Tibial artery (tissue), 4 donors: ENCODE measurements at regions of chr19 and their contacts with region 1.

Region 1: GRCh38 chr19:34404109-34404897 is at the start of gene PDCD2L:
- DNase-seq: peak; percentile 93
- H3K4me3 ChIP-seq: peak within 1 kb of the TSS; percentile 71 to 88
- H3K27ac ChIP-seq: peak within 1 kb of the TSS; percentile 57 to 68
- H3K4me1 ChIP-seq: peaks cover 0 to 16% (median 6%) of the 10 kb centered on the region in 4 donors
- H3K27me3 ChIP-seq: no peaks in the 10 kb centered on the region
- CTCF ChIP-seq: no peak

Region 2: GRCh38 chr19:34364830-34365462 is 39.4 kb before region 1 on chr19 and contains the start of gene GPI:
- intact Hi-C with region 1: loop called (anchors 5 kb)
- DNase-seq: peak; percentile 39 to 77
- H3K4me3 ChIP-seq: peak within 1 kb of the TSS; percentile 67 to 94
- H3K27ac ChIP-seq: peak within 1 kb of the TSS; percentile 65 to 83
- H3K4me1 ChIP-seq: peaks cover 0 to 32% (median 21%) of the 10 kb centered on the region in 4 donors
- H3K27me3 ChIP-seq: no peaks in the 10 kb centered on the region
- CTCF ChIP-seq: no peak

Region 3: GRCh38 chr19:34501339-34502320 is 97.3 kb after region 1 on chr19:
- intact Hi-C with region 1: loop called (anchors 5 kb)
- DNase-seq: peak; percentile 93 to 98
- H3K4me3 ChIP-seq: no peak overlapping the region
- H3K27ac ChIP-seq: peak overlapping the region; percentile 61 to 83
- H3K4me1 ChIP-seq: peaks cover 0 to 42% (median 14%) of the 10 kb centered on the region in 4 donors
- H3K27me3 ChIP-seq: no peaks in the 10 kb centered on the region
- CTCF ChIP-seq: peak; percentile 100